ENCODE measurements at regions of chr4 and their contacts with region 1.

Region 1: GRCh38 chr4:103982454-103982853 is 262.7 kb upstream of the TACR3 start:
- DNase-seq: no peak
- ATAC-seq: no peak
- H3K4me3 ChIP-seq: no peak overlapping the region
- H3K27ac ChIP-seq: no peak overlapping the region
- H3K4me1 ChIP-seq: no peaks in the 10 kb centered on the region
- H3K27me3 ChIP-seq: no peaks in the 10 kb centered on the region
- CTCF ChIP-seq: no peak
- POLR2A ChIP-seq: no peak

Region 2: DNA sequence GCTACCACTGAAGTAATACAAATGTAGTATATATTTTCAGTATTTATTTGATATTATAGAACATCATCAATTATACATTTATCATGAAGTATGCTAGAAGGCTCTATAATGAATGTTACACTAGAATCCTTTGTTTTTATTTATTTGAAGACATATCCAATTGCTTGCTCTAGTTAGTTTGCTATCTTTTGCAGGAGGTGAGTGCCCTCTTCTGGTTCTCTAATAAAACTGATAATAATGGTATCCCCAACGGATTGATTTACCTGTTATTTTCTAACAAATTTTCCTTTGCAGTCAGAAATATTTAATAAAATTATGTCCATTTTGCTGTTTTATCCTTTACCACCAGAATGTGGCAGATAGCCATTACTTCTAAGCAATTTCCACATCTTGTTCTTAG is 11.6 kb after region 1 on chr4:
- intact Hi-C with region 1: loop called in 1 of 10 experiments (anchors 1 kb)
- DNase-seq: no peak
- ATAC-seq: no peak
- H3K4me3 ChIP-seq: no peak overlapping the region
- H3K27ac ChIP-seq: no peak overlapping the region
- H3K4me1 ChIP-seq: no peaks in the 10 kb centered on the region
- H3K27me3 ChIP-seq: no peaks in the 10 kb centered on the region
- CTCF ChIP-seq: no peak
- POLR2A ChIP-seq: no peak

Region 3: GRCh38 chr4:104073245-104073644 is 90.8 kb after region 1 on chr4:
- intact Hi-C with region 1: no loop called
- DNase-seq: no peak
- ATAC-seq: no peak
- H3K4me3 ChIP-seq: no peak overlapping the region
- H3K27ac ChIP-seq: no peak overlapping the region
- H3K4me1 ChIP-seq: no peaks in the 10 kb centered on the region
- H3K27me3 ChIP-seq: no peaks in the 10 kb centered on the region
- CTCF ChIP-seq: no peak
- POLR2A ChIP-seq: no peak

Region 4: DNA sequence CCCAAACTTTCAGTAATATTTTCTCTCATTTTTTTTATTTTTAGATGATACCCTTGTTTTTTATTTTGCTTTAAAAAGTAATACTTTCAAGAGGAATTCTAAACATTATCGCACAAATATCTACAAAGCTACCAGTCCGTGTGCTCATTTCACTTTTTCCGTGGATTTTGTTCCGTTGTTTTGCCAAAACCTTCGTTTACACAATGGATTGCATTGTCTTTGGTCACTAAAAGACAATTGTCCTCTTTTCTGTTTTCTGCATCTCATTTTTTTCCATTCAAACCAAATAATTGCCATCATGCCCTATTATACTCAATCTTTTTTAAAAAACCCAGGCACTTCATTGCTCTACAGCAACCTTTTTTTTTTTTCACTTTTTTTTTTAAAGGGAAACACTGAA is 297.3 kb after region 1 on chr4:
- intact Hi-C with region 1: no loop called
- DNase-seq: no peak
- ATAC-seq: no peak
- H3K4me3 ChIP-seq: no peak overlapping the region
- H3K27ac ChIP-seq: no peak overlapping the region
- H3K4me1 ChIP-seq: no peaks in the 10 kb centered on the region
- H3K27me3 ChIP-seq: no peaks in the 10 kb centered on the region
- CTCF ChIP-seq: no peak
- POLR2A ChIP-seq: no peak